Heart right ventricle (tissue), 16 donors: ENCODE measurements at regions of chr6 and their contacts with region 1.

Region 1: DNA sequence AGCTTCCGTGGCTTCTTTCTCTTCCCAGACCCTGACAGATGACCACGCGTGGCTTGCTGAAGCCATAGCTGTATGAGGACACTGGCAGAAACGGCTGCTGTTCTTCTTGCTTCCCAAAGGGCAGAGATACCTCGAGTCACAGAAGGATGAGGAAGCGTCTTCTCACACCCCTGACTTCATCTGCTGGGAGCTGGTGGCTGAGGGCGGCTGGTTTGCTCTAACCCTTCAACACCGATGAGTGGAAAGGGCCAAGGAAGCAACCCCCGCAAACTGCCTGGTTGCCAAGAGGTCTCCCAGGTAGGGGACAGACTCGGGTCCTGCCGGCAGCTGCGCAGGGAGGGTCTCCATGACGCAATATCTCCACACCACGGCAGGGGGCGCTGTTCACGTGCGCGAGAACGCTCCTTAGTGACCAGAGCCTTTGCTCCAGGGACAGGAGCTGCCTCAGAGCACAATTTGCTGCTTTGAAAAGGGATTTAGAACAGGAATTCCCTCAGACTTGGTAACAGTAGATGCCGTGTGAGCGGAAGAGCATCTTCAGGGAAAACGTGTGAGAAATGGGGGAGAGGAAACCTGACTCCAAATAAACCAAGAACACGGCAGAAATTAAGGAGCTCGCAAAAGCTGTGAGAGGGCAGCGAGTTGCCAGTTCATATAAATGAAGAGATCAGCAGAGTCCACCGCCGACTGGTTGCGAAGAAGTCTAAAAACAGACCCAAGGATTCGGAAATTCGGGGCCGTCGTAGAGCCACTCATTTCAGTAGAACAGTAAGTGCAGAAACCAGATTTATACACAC is 80.2 kb downstream of the ERMARD start:
- DNase-seq: peak; percentile 69 to 84
- ATAC-seq: peak; percentile 86 to 96 (median 93)
- H3K4me3 ChIP-seq: no peak overlapping the region
- H3K27ac ChIP-seq: no peak overlapping the region
- H3K4me1 ChIP-seq: peaks cover 0 to 18% (median 12%) of the 10 kb centered on the region in 9 donors
- H3K27me3 ChIP-seq: peaks cover 0 to 35% (median 10%) of the 10 kb centered on the region in 7 donors
- CTCF ChIP-seq: peak; percentile 87 to 98 (median 94)

Region 2: DNA sequence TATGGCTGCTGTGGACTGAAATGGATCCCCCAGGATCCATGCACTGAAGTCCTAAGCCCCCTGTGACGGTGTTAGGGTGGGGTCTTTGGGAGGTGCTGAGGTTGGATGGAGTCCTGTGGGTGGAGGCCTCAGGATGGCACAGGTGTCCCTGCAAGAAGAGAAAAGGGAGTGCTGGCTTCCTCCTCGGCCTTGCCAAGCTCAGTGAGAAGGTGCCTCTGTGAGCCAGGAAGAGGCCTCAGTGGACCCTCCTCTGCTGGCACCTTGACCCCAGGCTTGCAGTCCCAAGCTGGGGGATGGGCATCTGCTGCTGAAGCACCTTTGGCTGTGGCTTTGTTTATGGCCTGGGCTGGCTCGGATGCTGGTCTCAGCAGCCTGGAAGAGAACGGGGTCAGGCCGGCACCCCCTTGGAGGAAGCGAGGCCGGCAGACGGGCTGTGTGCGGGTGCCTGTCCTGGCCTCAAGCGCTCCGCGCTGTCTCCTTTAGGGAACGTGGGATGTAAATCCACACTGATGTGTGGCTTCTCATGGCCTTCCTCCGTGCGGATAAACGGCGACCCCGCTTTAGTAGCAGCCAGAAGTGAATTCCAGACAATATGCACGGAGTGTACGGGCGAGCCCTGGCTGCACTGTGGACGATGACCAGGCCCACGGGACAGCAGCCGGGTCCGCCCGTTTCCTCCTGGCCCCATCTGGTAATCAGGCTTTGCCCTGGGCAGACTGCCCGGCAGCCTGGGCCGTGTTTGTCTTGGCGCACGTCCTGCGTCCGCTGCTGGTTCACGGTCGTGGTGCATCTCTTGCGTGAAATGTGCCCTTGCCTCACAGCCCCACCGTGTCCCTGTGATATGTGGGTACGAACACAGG is 102.4 kb after region 1 on chr6:
- intact Hi-C with region 1: loop called in 2 of 10 experiments (anchors 10 kb)
- DNase-seq: peak; percentile 54 to 74
- ATAC-seq: peak; percentile 83 to 93 (median 90)
- H3K4me3 ChIP-seq: peak overlapping the region in 1 of 10 donors; percentile 15
- H3K27ac ChIP-seq: no peak overlapping the region
- H3K4me1 ChIP-seq: peaks cover 0 to 20% (median 8%) of the 10 kb centered on the region in 9 donors
- H3K27me3 ChIP-seq: peaks cover 0 to 34% (median 14%) of the 10 kb centered on the region in 7 donors
- CTCF ChIP-seq: no peak

Region 3: GRCh38 chr6:170178561-170179477 is 347.2 kb after region 1 on chr6:
- intact Hi-C with region 1: loop called in 1 of 10 experiments (anchors 10 kb)
- DNase-seq: no peak
- ATAC-seq: peak in 4 of 8 donors; percentile 29 to 59 (median 51)
- H3K4me3 ChIP-seq: no peak overlapping the region
- H3K27ac ChIP-seq: peak overlapping the region in 2 of 10 donors; percentile 14 to 27
- H3K4me1 ChIP-seq: peaks cover 0 to 20% (median 7%) of the 10 kb centered on the region in 9 donors
- H3K27me3 ChIP-seq: no peaks in the 10 kb centered on the region
- CTCF ChIP-seq: no peak

Region 4: DNA sequence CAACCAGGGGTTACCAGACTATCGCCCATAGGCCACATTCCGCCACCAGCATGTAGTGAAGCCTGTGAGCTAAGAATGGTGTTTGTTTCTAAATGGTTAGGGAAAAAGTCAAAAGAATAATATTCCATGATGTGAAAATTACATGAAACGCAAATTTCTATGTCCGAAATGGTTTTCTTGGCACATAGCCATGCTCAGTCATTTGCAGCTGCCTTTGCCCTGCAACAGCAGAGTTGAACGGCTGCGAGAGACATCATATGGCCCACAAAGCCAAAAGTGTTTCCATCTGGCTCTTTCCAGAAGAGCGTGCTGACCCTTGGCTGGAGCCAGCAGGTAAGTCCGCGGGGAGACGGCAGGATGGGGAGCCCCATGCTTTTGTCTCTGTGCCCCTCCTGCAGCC is 535.6 kb after region 1 on chr6:
- intact Hi-C with region 1: loop called in 1 of 10 experiments (anchors 10 kb)
- DNase-seq: no peak
- ATAC-seq: no peak
- H3K4me3 ChIP-seq: no peak overlapping the region
- H3K27ac ChIP-seq: no peak overlapping the region
- H3K4me1 ChIP-seq: peaks cover 0 to 19% (median 3%) of the 10 kb centered on the region in 9 donors
- H3K27me3 ChIP-seq: no peaks in the 10 kb centered on the region
- CTCF ChIP-seq: no peak

Region 5: DNA sequence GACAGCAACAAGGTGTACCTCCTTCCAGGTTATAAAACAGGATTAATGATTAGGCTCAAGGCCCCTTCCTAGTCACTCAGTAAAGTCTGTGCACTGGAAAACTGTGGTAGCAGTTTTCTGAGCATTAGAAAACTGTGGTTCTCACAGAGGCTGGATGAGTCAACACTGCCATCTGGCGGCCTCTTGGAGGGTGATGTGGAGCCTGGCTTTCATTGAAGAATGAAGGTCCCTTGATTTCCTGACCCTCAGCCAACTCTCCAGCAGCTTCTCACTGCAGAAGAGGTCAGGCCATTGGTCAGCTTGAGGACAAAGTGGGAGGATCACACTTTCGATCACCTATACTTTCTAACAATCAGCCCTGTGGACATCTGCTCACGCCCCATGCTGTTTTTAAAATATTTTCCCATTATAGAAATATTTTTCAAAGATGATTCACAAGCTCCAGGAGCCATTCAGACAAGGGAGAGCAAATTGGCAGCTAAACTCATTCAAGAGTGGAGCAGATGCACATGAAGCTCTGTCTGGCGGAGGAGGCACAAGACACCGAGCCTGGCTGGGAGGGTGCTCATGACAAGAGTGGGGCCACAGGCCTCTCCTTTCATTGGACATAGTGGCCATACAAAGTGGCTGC is 698.3 kb after region 1 on chr6:
- intact Hi-C with region 1: loop called in 9 of 10 experiments (anchors 1 to 10 kb)
- DNase-seq: peak; percentile 75 to 78
- ATAC-seq: peak; percentile 75 to 90 (median 84)
- H3K4me3 ChIP-seq: no peak overlapping the region
- H3K27ac ChIP-seq: no peak overlapping the region
- H3K4me1 ChIP-seq: peaks cover 0 to 11% (median 0%) of the 10 kb centered on the region in 9 donors
- H3K27me3 ChIP-seq: no peaks in the 10 kb centered on the region
- CTCF ChIP-seq: peak; percentile 82 to 93 (median 90)